ENCODE measurements at regions of chr17 and their contacts with region 1.

Region 1: GRCh38 chr17:60618854-60619412 is 18.9 kb downstream of the PPM1D start:
- DNase-seq: no peak
- H3K4me3 ChIP-seq: no peak overlapping the region
- H3K27ac ChIP-seq: no peak overlapping the region
- H3K27me3 ChIP-seq: no peaks in the 10 kb centered on the region
- CTCF ChIP-seq: 0 out of 2 replicates have a peak, but pooled peaks have one; percentile 2

Region 2: GRCh38 chr17:60514053-60514452 is 104.9 kb before region 1 on chr17:
- CTCF ChIA-PET with region 1: no interaction called
- POLR2A ChIA-PET with region 1: no interaction called
- DNase-seq: no peak
- H3K4me3 ChIP-seq: no peak overlapping the region
- H3K27ac ChIP-seq: no peak overlapping the region
- H3K27me3 ChIP-seq: no peaks in the 10 kb centered on the region
- CTCF ChIP-seq: no peak

Region 3: DNA sequence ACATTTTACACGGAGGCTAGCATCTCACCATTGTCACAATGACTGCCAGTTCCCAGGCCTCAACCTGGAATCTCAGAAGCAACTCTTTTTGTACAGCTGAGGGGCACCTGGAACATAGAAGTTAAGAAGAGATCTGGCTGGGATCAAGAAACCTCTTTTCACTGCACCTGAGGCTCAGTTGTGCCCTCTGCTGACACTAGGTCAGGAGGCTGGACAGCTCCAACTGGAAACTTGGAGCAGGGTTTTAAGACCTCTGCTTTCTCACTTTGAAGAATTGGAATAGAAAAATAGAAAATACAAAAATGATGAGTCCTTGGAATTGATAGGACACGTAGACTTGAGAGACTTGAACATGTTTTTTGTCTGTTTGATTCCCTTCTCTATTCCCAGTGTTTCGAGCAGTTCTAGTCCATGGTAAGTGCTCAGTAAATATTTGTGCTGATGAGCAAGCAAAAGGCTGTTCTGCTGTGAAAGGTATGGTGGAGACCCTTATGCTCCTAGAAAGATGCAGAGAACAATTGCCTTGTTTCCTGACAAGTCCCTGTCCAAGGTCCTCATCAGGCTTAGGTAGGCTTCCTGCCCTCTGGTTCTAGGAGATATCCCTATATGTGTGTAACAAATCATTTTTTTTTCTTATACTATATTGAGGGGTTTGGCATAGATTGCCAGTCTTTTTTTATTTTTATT is 32.5 kb before region 1 on chr17:
- CTCF ChIA-PET with region 1: no interaction called
- POLR2A ChIA-PET with region 1: no interaction called
- DNase-seq: no peak
- H3K4me3 ChIP-seq: no peak overlapping the region
- H3K27ac ChIP-seq: no peak overlapping the region
- H3K27me3 ChIP-seq: peaks cover 2% of the 10 kb centered on the region
- CTCF ChIP-seq: peak; percentile 35; the same call in 1 of the 2 replicates

Region 4: DNA sequence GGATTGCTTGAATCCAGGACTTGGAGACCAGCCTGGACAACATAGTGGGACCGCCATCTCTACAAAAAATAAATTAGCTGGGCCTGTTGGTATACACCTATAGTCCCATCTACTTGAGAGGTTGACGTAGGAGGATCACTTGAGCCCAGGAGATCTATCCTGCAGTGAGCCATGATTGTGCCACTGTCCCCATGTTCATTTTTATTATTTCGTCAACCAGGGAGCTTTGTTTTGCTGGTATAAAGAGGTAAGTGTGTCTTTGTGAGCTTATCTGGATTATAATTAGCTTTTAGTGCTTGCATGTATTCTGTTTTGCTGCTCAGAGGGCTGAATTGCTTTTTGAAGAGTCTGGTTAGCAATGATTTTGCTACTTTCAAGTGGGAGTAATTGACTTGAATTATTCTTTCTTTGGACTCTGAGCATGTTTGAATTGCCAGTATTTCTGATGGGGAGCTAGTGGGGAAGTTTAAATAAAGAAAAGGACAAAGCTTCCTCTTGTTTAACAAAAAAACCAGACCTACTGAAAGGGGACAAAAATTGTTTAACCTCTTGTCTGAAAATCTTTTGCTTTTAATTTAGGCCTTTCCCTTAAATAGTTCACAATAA is 27.1 kb after region 1 on chr17:
- CTCF ChIA-PET with region 1: no interaction called
- POLR2A ChIA-PET with region 1: no interaction called
- DNase-seq: no peak
- H3K4me3 ChIP-seq: no peak overlapping the region
- H3K27ac ChIP-seq: no peak overlapping the region
- H3K27me3 ChIP-seq: no peaks in the 10 kb centered on the region
- CTCF ChIP-seq: no peak

Region 5: DNA sequence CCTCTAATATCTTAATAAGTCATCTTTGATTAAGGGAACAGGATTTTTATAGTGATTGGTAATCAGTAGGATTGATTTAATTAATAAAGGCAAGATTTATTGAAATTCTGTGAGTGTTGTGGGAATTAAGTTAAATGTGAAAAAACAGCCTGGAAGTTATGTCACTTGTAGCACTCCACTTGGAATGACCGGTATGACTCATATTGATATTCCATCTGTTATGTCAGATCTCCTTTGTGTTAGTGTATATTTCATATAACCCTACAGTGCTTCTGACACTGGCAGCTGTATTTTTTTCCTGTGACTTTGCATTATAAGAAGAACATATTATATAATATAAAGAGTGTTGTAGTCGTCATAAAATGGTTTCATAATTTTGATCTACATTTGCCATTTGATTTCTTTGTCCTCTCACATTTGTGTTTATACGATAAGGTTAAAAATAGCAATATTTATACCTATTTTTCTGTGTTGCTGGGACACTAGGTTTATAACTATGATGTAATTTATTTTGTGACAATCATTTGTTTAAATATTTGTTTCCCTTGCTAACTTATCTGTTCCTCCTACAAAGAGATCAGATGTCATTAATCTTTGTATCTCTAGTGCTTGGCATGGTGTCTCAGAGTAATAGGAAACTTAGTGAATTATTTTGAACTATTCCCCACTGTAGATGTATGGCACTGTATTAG is 307.7 kb after region 1 on chr17:
- CTCF ChIA-PET with region 1: interaction called, 12 read pairs
- POLR2A ChIA-PET with region 1: no interaction called
- DNase-seq: no peak
- H3K4me3 ChIP-seq: no peak overlapping the region
- H3K27ac ChIP-seq: no peak overlapping the region
- H3K27me3 ChIP-seq: no peaks in the 10 kb centered on the region
- CTCF ChIP-seq: no peak